ENCODE measurements at regions of chr20 and their contacts with region 1.

Region 1: GRCh38 chr20:10316582-10316981 is 98.0 kb downstream of the SNAP25 start:
- DNase-seq: peak; percentile 9
- ATAC-seq: peak; percentile 63
- H3K4me3 ChIP-seq: no peak overlapping the region
- H3K27ac ChIP-seq: no peak overlapping the region
- H3K4me1 ChIP-seq: no peaks in the 10 kb centered on the region
- H3K27me3 ChIP-seq: peaks cover 0 to 2% of the 10 kb centered on the region in 2 experiments; a peak in 2 of 4 replicates
- CTCF ChIP-seq: peak; percentile 35 to 52 (median 40); a peak in 4 of 6 replicates
- EP300 ChIP-seq: no peak
- POLR2A ChIP-seq: no peak
- RAD21 ChIP-seq: peak; percentile 34

Region 2: GRCh38 chr20:10131612-10132345 is 184.8 kb before region 1 on chr20:
- CTCF ChIA-PET with region 1: no interaction called
- POLR2A ChIA-PET with region 1: no interaction called
- RAD21 ChIA-PET with region 1: no interaction called
- SMC1A ChIA-PET with region 1: no interaction called
- in situ Hi-C with region 1: no loop called
- intact Hi-C with region 1: no loop called
- DNase-seq: no peak
- ATAC-seq: no peak
- H3K4me3 ChIP-seq: no peak overlapping the region
- H3K27ac ChIP-seq: no peak overlapping the region
- H3K4me1 ChIP-seq: no peaks in the 10 kb centered on the region
- H3K27me3 ChIP-seq: no peaks in the 10 kb centered on the region; a peak in 1 of 4 replicates
- CTCF ChIP-seq: no peak
- EP300 ChIP-seq: no peak
- POLR2A ChIP-seq: no peak
- RAD21 ChIP-seq: no peak

Region 3: GRCh38 chr20:10297684-10298240 is 18.8 kb before region 1 on chr20:
- CTCF ChIA-PET with region 1: interaction called, 12 read pairs
- POLR2A ChIA-PET with region 1: no interaction called
- RAD21 ChIA-PET with region 1: interaction called, 3 read pairs
- SMC1A ChIA-PET with region 1: interaction called, 6 read pairs
- in situ Hi-C with region 1: no loop called
- intact Hi-C with region 1: no loop called
- DNase-seq: no peak
- ATAC-seq: no peak
- H3K4me3 ChIP-seq: no peak overlapping the region
- H3K27ac ChIP-seq: no peak overlapping the region
- H3K4me1 ChIP-seq: peaks cover 2% of the 10 kb centered on the region; the same call in 1 of the 2 replicates
- H3K27me3 ChIP-seq: no peaks in the 10 kb centered on the region
- CTCF ChIP-seq: no peak
- EP300 ChIP-seq: no peak
- POLR2A ChIP-seq: no peak
- RAD21 ChIP-seq: no peak

Region 4: DNA sequence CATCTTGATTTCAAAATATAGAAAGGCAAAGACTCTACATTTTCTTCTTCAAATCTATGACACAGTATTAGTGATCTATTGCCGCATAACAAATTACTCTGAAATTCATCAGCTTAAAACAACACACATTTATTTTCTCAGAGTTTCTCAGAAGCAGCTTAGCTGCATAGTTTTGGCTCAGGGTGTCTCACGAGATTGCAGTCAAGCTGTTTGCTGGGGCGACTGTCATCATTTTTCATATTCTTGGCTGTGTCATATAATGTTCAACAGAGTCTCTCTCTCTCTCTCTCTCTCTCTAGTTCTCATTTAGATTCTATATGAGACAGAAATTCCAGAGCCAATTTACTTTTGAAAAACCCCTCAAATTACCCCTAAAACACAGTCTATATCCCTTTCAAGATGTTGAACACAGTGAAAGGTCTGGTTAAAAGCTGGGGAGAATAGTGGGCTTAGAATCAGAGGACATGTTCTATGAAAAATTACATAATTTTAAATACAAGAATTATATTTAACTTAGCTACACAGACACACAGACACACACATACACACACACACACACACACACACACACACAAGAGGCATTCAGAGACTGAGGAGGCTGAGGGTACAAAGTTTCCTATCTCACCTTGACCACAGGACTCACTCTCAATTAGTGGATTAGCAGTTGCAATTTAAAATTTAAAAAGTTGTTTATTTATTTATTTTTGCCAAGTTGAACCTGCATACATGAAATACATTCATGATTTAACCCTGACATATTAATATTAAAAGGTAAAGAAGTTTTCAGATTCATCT is 30.7 kb after region 1 on chr20:
- CTCF ChIA-PET with region 1: interaction called, 19 read pairs
- POLR2A ChIA-PET with region 1: no interaction called
- RAD21 ChIA-PET with region 1: interaction called, 12 read pairs
- SMC1A ChIA-PET with region 1: interaction called, 35 read pairs
- in situ Hi-C with region 1: no loop called
- intact Hi-C with region 1: no loop called
- DNase-seq: no peak
- ATAC-seq: no peak
- H3K4me3 ChIP-seq: no peak overlapping the region
- H3K27ac ChIP-seq: no peak overlapping the region
- H3K4me1 ChIP-seq: peaks cover 12% of the 10 kb centered on the region
- H3K27me3 ChIP-seq: no peaks in the 10 kb centered on the region
- CTCF ChIP-seq: no peak
- EP300 ChIP-seq: no peak
- POLR2A ChIP-seq: no peak
- RAD21 ChIP-seq: no peak

Region 5: DNA sequence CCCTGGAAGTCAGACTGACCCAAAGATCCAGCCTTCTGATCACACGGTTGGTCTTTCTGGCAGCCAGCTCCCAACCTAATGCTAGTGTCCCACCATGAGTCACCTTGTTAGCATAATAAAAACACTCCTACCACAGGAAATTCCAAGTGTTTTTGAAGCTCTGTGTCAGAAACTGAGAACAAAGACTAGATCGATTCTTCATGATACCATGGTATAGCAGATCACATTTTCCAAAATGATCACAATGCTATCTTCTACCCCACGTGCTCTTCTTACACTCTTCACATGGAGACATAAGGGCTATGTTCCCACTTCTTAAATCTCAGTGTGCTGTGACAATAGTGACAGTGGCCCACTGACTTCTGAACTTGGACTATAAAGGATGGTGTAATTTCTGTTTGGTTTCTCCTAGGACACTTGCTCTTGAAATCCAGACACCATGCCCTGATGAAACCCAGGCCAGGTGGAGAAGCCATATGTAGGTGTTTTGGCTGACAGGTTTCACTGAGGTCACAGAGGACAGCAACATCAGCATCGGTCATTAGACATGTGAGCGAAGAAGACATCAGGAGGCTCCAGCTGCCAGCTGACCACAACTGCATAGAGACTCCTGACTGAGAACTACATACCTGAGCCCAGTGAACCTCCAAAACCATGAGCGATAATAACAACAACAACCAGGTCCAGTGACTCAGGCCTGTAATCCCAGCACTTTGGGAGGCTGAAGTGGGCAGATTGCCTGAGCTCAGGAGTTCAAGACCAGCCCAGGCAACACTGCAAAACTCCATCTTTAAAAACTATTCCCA is 59.9 kb after region 1 on chr20:
- CTCF ChIA-PET with region 1: interaction called, 187 read pairs
- POLR2A ChIA-PET with region 1: no interaction called
- RAD21 ChIA-PET with region 1: interaction called, 80 read pairs
- SMC1A ChIA-PET with region 1: interaction called, 86 read pairs
- in situ Hi-C with region 1: no loop called
- intact Hi-C with region 1: loop called (anchors 1 kb)
- DNase-seq: no peak
- ATAC-seq: no peak
- H3K4me3 ChIP-seq: no peak overlapping the region
- H3K27ac ChIP-seq: no peak overlapping the region
- H3K4me1 ChIP-seq: no peaks in the 10 kb centered on the region
- H3K27me3 ChIP-seq: no peaks in the 10 kb centered on the region
- CTCF ChIP-seq: no peak
- EP300 ChIP-seq: no peak
- POLR2A ChIP-seq: no peak
- RAD21 ChIP-seq: no peak

Region 6: DNA sequence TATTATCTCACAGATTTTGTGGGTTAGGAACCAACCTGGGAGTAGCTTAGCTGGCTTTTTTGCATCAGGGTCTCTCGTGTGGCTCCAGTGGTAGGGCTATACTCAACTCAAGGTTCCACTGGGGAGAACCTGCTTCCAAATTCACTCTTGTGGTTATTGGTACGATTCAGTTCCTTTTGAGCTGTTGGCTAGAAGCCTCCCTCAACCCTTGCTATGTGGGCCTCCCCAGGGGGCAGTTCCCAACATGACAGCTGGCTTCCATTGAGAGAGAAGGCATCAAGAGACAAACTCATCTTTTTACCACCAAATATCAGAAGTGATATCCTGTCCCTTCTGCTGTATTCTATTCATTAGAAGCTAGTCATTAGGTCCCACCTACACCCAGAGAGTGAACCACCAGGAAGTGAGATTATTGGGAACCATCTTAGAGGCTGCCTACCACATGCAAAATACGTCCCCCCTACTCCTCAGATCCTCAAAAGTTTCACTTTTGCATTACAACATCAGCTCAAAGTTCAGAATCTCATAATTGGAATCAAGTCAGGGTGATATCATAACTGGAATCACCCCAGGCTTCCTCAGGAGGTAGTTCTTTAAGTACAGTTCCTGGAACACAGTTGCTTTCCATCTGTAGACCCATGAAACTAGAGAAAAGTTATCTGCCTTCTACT is 86.5 kb after region 1 on chr20:
- CTCF ChIA-PET with region 1: interaction called, 13 read pairs
- POLR2A ChIA-PET with region 1: no interaction called
- RAD21 ChIA-PET with region 1: interaction called, 3 read pairs
- SMC1A ChIA-PET with region 1: interaction called, 9 read pairs
- in situ Hi-C with region 1: no loop called
- intact Hi-C with region 1: no loop called
- DNase-seq: no peak
- ATAC-seq: peak; percentile 63
- H3K4me3 ChIP-seq: no peak overlapping the region
- H3K27ac ChIP-seq: peak overlapping the region; percentile 10; the same call in 1 of the 2 replicates
- H3K4me1 ChIP-seq: peaks cover 9% of the 10 kb centered on the region
- H3K27me3 ChIP-seq: no peaks in the 10 kb centered on the region
- CTCF ChIP-seq: no peak
- EP300 ChIP-seq: no peak
- POLR2A ChIP-seq: no peak
- RAD21 ChIP-seq: no peak

Region 7: DNA sequence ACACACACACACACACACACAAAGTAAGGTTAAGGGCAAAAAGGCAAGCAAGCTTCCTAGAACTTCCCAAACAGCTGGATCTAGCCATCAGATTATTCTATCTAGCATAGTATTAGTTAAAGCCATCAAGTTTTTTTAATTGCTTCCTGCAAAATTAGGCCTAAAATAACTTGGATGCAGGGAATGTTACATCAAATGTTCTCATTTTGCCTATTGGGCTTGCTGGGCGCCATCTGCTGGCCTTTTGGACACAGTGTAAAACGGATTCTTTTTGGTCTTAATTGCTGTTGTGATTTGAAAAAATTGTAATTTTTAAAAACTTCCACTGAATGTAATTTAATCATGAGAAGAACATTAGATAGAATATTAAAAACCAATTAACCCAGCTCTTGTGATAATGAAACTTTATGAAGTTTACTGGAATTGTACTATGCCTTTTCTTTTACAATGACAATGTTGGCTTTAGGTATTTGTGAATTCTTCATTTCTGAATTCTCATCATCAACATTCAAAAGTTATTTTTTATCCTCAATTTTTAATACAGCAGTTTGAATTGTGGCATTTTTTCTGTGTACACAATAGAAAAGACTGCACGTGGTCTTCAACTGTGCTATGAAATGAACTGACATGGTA is 110.6 kb after region 1 on chr20:
- CTCF ChIA-PET with region 1: interaction called, 50 read pairs
- POLR2A ChIA-PET with region 1: no interaction called
- RAD21 ChIA-PET with region 1: interaction called, 28 read pairs
- SMC1A ChIA-PET with region 1: interaction called, 56 read pairs
- in situ Hi-C with region 1: no loop called
- intact Hi-C with region 1: loop called (anchors 1 kb)
- DNase-seq: no peak
- ATAC-seq: peak; percentile 37
- H3K4me3 ChIP-seq: no peak overlapping the region
- H3K27ac ChIP-seq: no peak overlapping the region
- H3K4me1 ChIP-seq: peaks cover 18% of the 10 kb centered on the region
- H3K27me3 ChIP-seq: no peaks in the 10 kb centered on the region
- CTCF ChIP-seq: peak; percentile 75 to 78 (median 75)
- EP300 ChIP-seq: no peak
- POLR2A ChIP-seq: no peak
- RAD21 ChIP-seq: peak; percentile 63

Measured in GM12878 (cell line).